Esophagus squamous epithelium (tissue), 5 donors: ENCODE measurements at regions of chr2 and their contacts with region 1.

Region 1: GRCh38 chr2:106098081-106098480 is 96.0 kb downstream of the UXS1 start:
- DNase-seq: no peak
- H3K4me3 ChIP-seq: no peak overlapping the region
- H3K27ac ChIP-seq: no peak overlapping the region
- H3K4me1 ChIP-seq: no peaks in the 10 kb centered on the region
- H3K27me3 ChIP-seq: no peaks in the 10 kb centered on the region
- CTCF ChIP-seq: peak in 3 of 6 experiments; percentile 25 to 34 (median 33)
- POLR2A ChIP-seq: no peak

Region 2: GRCh38 chr2:105582952-105583660 is 515.0 kb before region 1 on chr2:
- intact Hi-C with region 1: loop called (anchors 10 kb)
- DNase-seq: no peak
- H3K4me3 ChIP-seq: no peak overlapping the region
- H3K27ac ChIP-seq: no peak overlapping the region
- H3K4me1 ChIP-seq: no peaks in the 10 kb centered on the region
- H3K27me3 ChIP-seq: no peaks in the 10 kb centered on the region
- CTCF ChIP-seq: no peak
- POLR2A ChIP-seq: no peak